Activated B cell treated with CpG ODN at 0.5 μM for 24 hours (primary cell): ENCODE measurements at regions of chr12 and their contacts with region 1.

Region 1: GRCh38 chr12:108562348-108563135 is at the start of gene ISCU:
- DNase-seq: peak; percentile 100
- ATAC-seq: peak; percentile 71
- H3K4me3 Mint-ChIP-seq: peak within 1 kb of the TSS; percentile 100
- H3K27ac Mint-ChIP-seq: peak within 1 kb of the TSS; percentile 99
- H3K4me1 Mint-ChIP-seq: peaks cover 73% of the 10 kb centered on the region
- H3K27me3 Mint-ChIP-seq: no peaks in the 10 kb centered on the region
- CTCF ChIP-seq: no peak
- total RNA-seq, gene ISCU: 114 and 117 TPM in 2 replicates

Region 2: DNA sequence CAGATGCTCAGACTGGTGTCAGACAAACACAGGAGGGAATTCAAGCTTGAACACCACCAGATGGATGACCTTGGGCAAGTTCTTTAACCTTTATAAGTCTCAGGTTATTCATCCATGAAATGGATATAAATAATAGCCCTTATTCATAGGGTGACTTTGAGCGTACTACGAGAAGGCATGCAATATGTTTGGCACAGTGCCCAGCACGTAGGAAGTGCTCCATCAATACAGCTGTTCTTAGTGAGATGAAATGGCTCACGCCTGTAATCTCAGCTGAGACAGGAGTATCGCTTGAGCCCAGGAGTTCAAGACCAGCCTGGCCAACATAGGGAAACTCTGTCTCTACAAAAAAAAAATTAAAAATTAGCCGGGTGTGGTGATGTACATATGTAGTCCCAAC is 132.3 kb before region 1 on chr12:
- CTCF ChIA-PET with region 1: no interaction called
- POLR2A ChIA-PET with region 1: no interaction called
- intact Hi-C with region 1: no loop called
- DNase-seq: no peak
- ATAC-seq: no peak
- H3K4me3 Mint-ChIP-seq: no peak overlapping the region
- H3K27ac Mint-ChIP-seq: no peak overlapping the region
- H3K4me1 Mint-ChIP-seq: no peaks in the 10 kb centered on the region
- H3K27me3 Mint-ChIP-seq: peaks cover 3% of the 10 kb centered on the region
- CTCF ChIP-seq: no peak

Region 3: DNA sequence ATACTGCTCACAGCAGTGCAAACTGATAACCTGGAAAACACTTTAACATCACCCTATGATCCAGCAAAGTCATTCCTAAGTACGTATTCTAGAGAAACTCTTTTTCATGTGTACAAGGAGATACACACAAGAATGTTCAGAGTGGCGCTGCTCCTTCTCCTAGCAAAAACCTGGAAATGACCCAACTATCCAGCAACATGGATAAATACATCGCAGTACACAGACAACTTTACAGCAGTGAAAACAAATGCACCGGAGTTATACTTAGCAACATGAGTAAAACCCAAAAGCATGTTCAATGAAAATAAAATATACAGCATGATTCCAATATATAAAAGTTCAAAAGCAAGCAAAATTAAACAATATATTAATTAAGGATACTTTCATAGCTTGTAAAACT is 20.2 kb before region 1 on chr12:
- CTCF ChIA-PET with region 1: no interaction called
- POLR2A ChIA-PET with region 1: interaction called, 17 read pairs
- intact Hi-C with region 1: loop called (anchors 1 kb)
- DNase-seq: no peak
- ATAC-seq: no peak
- H3K4me3 Mint-ChIP-seq: no peak overlapping the region
- H3K27ac Mint-ChIP-seq: peak overlapping the region; percentile 81
- H3K4me1 Mint-ChIP-seq: peaks cover 20% of the 10 kb centered on the region
- H3K27me3 Mint-ChIP-seq: no peaks in the 10 kb centered on the region
- CTCF ChIP-seq: no peak

Region 4: DNA sequence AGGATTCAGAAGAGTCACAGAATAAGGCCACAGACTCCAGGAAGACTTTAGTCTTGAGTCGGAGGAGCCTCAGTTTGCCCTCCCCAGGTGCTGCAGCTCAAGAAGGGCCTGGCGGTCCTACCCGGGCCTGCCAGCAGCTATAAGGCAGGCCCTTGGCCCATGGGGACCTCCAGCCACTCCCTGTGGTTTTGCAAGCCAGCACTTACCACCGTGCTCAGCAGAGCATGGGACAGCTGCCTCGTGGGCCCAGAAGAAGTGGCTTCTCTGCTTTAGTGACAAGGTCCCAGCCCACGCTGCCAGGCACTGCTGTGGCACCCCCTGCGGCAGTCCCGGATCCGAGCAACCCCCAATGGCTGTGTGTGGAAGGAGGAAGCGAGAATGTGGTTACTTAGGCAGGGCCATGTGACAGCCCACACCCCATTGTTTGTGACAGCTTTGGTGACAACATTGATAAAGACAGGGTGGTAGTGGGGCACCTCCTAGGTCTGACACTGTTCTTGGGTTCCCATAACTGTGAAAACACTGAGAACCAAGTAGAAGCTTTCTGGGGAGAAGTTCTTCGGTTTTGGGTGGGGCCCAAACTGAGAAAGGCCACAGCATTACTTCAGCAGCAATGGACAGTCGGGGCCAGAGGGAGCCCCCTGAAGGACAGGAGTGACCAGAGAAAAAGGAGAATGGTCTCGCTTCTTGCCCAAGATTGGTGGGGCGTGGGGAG is 71.1 kb after region 1 on chr12 and contains the start of gene SELPLG:
- CTCF ChIA-PET with region 1: interaction called, 15 read pairs
- POLR2A ChIA-PET with region 1: interaction called, 135 read pairs
- intact Hi-C with region 1: loop called (anchors 1 kb)
- DNase-seq: peak; percentile 79
- ATAC-seq: peak; percentile 76
- H3K4me3 Mint-ChIP-seq: peak within 1 kb of the TSS; percentile 85
- H3K27ac Mint-ChIP-seq: peak within 1 kb of the TSS; percentile 98
- H3K4me1 Mint-ChIP-seq: peaks cover 95% of the 10 kb centered on the region
- H3K27me3 Mint-ChIP-seq: no peaks in the 10 kb centered on the region
- CTCF ChIP-seq: no peak
- total RNA-seq, gene SELPLG: 1.8 and 2.0 TPM in 2 replicates

Region 5: DNA sequence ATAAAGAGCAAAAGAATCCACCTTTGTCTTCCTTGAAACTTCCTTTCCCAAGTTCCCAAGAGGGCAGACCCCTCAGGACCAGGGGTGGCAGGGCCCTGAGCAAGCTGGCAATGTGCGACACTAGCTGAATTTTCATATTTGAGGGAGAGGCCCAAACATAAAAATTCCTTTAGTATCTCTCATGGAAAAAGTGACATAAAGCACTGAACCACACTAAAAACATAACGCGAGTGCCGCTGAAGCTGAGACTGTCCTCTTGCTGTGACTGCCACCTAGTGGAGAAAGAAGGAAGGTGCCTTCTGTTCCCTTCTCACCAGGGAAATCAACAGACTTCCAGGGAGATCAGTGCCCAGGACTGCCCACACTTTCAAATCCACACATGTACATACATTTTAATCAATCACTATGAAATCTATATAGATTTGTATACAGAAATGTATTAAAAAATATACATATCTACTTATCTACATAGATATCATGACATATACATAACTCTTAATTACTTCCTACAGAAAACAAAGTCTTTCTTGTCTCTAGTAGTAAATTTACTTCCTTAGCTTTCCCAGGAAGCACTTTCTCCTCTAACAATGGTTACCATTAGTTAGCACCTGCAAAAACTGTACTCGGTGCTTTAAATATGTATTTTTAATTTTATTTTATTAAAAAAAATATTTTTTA is 241.0 kb after region 1 on chr12:
- CTCF ChIA-PET with region 1: interaction called, 68 read pairs
- POLR2A ChIA-PET with region 1: interaction called, 10 read pairs
- intact Hi-C with region 1: loop called (anchors 1 kb)
- DNase-seq: no peak
- ATAC-seq: peak; percentile 87
- H3K4me3 Mint-ChIP-seq: no peak overlapping the region
- H3K27ac Mint-ChIP-seq: peak overlapping the region; percentile 56
- H3K4me1 Mint-ChIP-seq: peaks cover 21% of the 10 kb centered on the region
- H3K27me3 Mint-ChIP-seq: no peaks in the 10 kb centered on the region
- CTCF ChIP-seq: peak; percentile 93

Region 6: DNA sequence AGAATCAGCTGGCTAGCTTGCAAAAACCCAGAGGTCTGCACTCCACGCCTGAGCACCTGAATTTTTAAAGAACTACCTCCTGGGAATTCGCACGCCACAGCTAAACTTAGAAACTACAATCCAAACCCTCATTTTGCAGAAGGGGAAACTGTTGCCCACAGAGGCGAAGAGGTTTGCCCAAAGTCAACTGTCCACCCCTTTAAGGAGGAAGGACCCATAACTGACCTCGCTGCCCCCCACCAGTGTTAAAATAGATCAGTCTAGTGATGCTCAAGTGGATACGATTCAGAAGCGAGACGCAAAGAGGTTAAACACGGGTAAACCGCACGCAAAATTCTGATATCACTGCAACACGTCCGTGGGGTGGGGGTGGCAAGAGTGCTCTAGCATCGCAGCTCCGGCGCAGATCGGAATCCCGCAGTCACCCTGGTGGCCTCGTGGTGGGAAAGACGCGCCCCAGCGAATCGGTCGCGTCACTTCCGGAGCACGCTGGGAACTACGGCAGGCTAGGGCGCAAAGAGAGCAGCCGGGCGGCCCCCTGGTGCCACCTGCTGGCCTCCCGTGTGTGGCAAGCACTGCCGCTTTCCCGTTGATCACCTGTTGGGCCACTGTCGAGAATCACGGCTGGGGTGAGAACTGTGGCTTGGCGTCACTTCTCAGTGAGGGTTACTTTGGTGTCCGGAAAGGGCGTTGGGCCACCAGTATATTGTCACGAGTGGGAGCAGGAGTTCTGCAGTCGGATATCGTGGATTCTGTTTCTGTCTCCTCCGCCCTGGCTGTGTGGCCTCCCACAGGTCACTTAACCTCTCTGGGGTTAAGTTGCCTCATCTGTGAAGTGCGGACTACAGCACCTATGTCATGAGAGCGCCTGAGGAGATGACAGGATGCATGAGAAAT is 530.7 kb after region 1 on chr12 and contains the start of gene ALKBH2:
- CTCF ChIA-PET with region 1: interaction called, 4 read pairs
- POLR2A ChIA-PET with region 1: interaction called, 9 read pairs
- intact Hi-C with region 1: loop called (anchors 1 kb)
- DNase-seq: peak; percentile 90
- ATAC-seq: peak; percentile 68
- H3K4me3 Mint-ChIP-seq: peak within 1 kb of the TSS; percentile 88
- H3K27ac Mint-ChIP-seq: peak within 1 kb of the TSS; percentile 92
- H3K4me1 Mint-ChIP-seq: peaks cover 33% of the 10 kb centered on the region
- H3K27me3 Mint-ChIP-seq: no peaks in the 10 kb centered on the region
- CTCF ChIP-seq: peak; percentile 92
- total RNA-seq, gene ALKBH2: 21.3 and 24.1 TPM in 2 replicates

Region 7: DNA sequence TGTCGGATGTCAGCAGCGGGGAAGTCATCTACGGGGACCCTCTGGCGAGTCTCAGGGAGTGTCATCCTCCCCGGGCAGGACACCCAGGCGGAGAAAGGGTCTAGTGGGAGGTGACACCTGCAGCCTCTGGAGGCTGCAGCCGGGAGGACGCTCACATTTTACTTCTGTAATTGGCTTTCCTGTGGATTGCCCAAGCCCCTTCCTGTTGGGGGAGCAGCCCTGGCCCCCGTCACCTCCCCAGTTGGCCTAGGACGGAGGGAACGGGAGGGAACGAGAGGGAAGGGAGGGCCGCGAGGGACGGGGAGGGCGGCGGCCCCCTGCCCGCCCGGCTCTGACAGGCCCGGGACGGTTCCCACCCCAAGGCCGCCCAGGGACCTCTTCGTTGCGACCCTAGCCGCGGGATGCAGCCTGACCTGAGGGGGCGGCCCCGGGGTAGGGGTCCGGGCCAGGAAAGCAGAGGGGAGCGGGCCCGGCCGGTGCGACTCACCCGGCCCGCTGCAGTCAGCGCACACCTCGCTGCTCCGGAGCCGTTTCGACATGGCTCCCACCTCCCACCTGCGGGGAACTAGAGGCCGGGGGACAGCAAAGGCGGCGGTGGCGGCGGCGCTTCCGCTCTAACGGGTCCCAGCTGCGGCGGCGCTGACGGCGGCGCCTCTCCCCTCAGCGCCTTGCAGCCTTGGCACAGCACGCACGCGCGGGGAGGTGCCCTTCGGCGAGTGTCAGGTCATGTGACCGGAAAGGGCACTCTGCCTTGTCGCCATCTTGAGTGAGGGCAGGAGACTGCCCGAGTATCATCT is 1433.3 kb after region 1 on chr12 and contains the start of gene GIT2:
- CTCF ChIA-PET with region 1: no interaction called
- POLR2A ChIA-PET with region 1: no interaction called
- intact Hi-C with region 1: loop called (anchors 5 kb)
- DNase-seq: peak; percentile 86
- ATAC-seq: peak; percentile 72
- H3K4me3 Mint-ChIP-seq: peak within 1 kb of the TSS; percentile 96
- H3K27ac Mint-ChIP-seq: peak within 1 kb of the TSS; percentile 95
- H3K4me1 Mint-ChIP-seq: peaks cover 80% of the 10 kb centered on the region
- H3K27me3 Mint-ChIP-seq: no peaks in the 10 kb centered on the region
- CTCF ChIP-seq: no peak
- total RNA-seq, gene GIT2: 89.2 and 107 TPM in 2 replicates